ENCODE measurements at regions of chr16 and their contacts with region 1.

Region 1: GRCh38 chr16:87850009-87851006 is 19.0 kb downstream of the SLC7A5 start:
- DNase-seq: no peak
- H3K4me3 ChIP-seq: no peak overlapping the region
- H3K27ac ChIP-seq: peak overlapping the region; percentile 11
- H3K27me3 ChIP-seq: no peaks in the 10 kb centered on the region
- CTCF ChIP-seq: peak; percentile 85

Region 2: GRCh38 chr16:87507351-87508069 is 342.8 kb before region 1 on chr16:
- CTCF ChIA-PET with region 1: no interaction called
- POLR2A ChIA-PET with region 1: no interaction called
- DNase-seq: no peak
- H3K4me3 ChIP-seq: no peak overlapping the region
- H3K27ac ChIP-seq: no peak overlapping the region
- H3K27me3 ChIP-seq: peaks cover 23% of the 10 kb centered on the region
- CTCF ChIP-seq: no peak

Region 3: DNA sequence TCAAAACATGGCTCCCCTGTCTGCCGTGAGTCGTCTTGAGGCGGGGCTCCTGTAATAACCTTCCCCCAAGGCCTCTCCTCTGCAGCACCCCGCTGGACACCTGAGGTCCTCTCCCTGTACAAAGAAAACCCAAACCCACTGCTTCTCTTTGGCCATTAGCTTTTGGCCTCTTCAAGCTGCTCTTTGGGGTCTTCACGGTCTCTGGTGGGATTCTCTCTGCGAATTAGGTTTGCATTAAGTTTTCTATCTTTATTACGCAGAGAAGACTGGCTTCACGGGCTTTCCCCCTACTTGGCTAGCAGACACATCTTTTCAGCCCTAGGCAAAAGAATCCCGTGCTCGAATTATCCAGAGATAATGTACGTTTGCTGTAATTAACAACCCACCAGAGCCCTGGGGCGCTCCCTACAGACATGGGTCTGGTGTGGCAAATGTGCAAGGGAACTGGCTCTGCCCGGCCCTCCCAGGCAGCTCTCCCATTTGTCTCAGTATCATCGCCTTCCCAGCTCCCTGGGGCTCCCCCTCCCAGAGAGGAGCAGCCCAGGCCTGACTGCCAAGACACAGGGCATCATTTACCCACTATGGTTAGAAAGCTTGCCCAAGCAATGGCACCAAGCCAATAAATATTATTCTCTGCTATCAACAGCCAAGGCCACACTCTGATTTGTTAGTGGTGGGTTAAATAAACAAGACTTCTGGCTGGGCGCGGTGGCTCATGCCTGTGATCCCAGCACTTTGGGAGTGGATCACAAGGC is 59.9 kb before region 1 on chr16:
- CTCF ChIA-PET with region 1: interaction called, 12 read pairs
- POLR2A ChIA-PET with region 1: interaction called, 3 read pairs
- DNase-seq: no peak
- H3K4me3 ChIP-seq: no peak overlapping the region
- H3K27ac ChIP-seq: peak overlapping the region; percentile 82
- H3K27me3 ChIP-seq: no peaks in the 10 kb centered on the region
- CTCF ChIP-seq: no peak

Region 4: GRCh38 chr16:87836844-87837581 is 13.3 kb before region 1 on chr16:
- CTCF ChIA-PET with region 1: interaction called, 41 read pairs
- POLR2A ChIA-PET with region 1: no interaction called
- DNase-seq: no peak
- H3K4me3 ChIP-seq: no peak overlapping the region
- H3K27ac ChIP-seq: no peak overlapping the region
- H3K27me3 ChIP-seq: no peaks in the 10 kb centered on the region
- CTCF ChIP-seq: no peak

Region 5: DNA sequence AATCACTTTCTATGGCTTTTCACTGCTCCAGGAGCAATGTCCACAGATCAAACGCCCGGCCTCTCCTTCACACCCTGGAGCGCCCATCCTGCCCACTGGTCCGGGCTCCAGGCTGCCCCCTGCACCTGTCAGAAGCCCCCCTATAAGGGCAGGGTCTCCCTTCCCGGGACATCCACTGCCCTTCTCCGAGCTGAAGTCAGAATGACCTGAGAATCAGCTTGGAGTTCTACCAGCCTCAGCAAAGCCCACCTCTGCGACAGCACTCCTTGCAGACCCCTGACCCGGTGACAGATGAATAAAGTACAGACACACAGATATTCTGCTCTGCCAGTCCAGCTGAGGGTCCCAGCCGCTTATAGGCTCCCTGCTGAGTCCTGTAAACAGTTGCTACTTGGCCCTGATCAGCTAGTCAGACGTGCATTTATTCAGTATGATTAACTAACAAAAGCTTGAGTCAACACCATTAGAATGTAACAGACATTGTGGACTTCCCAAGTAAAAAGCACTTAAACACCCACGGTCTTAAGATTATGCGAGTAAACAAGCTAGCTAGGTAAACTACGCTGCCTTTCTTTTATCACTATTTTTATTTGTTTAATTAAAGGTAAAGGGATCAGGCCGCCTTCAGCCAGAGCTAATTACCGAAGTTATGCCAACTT is 14.2 kb after region 1 on chr16:
- CTCF ChIA-PET with region 1: interaction called, 46 read pairs
- POLR2A ChIA-PET with region 1: interaction called, 9 read pairs
- DNase-seq: no peak
- H3K4me3 ChIP-seq: no peak overlapping the region
- H3K27ac ChIP-seq: no peak overlapping the region
- H3K27me3 ChIP-seq: no peaks in the 10 kb centered on the region
- CTCF ChIP-seq: no peak

Region 6: GRCh38 chr16:87874639-87875465 is 24.5 kb after region 1 on chr16:
- CTCF ChIA-PET with region 1: interaction called, 46 read pairs
- POLR2A ChIA-PET with region 1: interaction called, 9 read pairs
- DNase-seq: no peak
- H3K4me3 ChIP-seq: no peak overlapping the region
- H3K27ac ChIP-seq: no peak overlapping the region
- H3K27me3 ChIP-seq: peaks cover 7% of the 10 kb centered on the region
- CTCF ChIP-seq: no peak

Region 7: DNA sequence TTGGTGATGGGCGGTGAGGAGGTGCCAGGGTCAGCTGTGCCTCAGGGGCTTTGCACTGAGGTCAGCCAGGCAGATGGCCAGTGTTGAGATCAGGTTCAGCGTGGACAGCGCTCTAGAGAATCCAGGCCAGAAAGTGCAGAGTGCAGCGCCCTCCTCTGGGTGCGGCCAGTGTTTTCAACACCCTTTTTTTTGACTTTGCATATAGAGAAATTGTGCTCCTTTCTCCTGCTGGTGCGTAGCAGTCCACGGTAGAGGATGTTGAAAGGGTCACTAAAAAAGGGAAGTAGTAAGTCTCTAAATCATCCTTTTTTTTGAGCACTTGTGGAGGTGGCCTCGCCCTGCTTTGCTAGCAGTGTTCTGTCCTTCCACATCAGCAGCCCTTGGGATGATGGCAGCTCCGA is 154.9 kb after region 1 on chr16:
- CTCF ChIA-PET with region 1: no interaction called
- POLR2A ChIA-PET with region 1: no interaction called
- DNase-seq: no peak
- H3K4me3 ChIP-seq: no peak overlapping the region
- H3K27ac ChIP-seq: no peak overlapping the region
- H3K27me3 ChIP-seq: no peaks in the 10 kb centered on the region
- CTCF ChIP-seq: peak; percentile 25; the same call in 1 of the 2 replicates